ENCODE measurements at regions of chr2 and their contacts with region 1.

Region 1: GRCh38 chr2:65576861-65577601 is 144.6 kb upstream of the SPRED2 start:
- DNase-seq: no peak
- H3K4me3 Mint-ChIP-seq: no peak overlapping the region
- H3K27ac Mint-ChIP-seq: no peak overlapping the region
- H3K4me1 Mint-ChIP-seq: peaks cover 9% of the 10 kb centered on the region
- H3K27me3 Mint-ChIP-seq: peaks cover 16% of the 10 kb centered on the region

Region 2: GRCh38 chr2:65040400-65041261 is 536.4 kb before region 1 on chr2:
- intact Hi-C with region 1: loop called (anchors 2 kb)
- DNase-seq: peak; percentile 94
- H3K4me3 Mint-ChIP-seq: peak overlapping the region; percentile 53
- H3K27ac Mint-ChIP-seq: no peak overlapping the region
- H3K4me1 Mint-ChIP-seq: peaks cover 20% of the 10 kb centered on the region
- H3K27me3 Mint-ChIP-seq: no peaks in the 10 kb centered on the region

Region 3: DNA sequence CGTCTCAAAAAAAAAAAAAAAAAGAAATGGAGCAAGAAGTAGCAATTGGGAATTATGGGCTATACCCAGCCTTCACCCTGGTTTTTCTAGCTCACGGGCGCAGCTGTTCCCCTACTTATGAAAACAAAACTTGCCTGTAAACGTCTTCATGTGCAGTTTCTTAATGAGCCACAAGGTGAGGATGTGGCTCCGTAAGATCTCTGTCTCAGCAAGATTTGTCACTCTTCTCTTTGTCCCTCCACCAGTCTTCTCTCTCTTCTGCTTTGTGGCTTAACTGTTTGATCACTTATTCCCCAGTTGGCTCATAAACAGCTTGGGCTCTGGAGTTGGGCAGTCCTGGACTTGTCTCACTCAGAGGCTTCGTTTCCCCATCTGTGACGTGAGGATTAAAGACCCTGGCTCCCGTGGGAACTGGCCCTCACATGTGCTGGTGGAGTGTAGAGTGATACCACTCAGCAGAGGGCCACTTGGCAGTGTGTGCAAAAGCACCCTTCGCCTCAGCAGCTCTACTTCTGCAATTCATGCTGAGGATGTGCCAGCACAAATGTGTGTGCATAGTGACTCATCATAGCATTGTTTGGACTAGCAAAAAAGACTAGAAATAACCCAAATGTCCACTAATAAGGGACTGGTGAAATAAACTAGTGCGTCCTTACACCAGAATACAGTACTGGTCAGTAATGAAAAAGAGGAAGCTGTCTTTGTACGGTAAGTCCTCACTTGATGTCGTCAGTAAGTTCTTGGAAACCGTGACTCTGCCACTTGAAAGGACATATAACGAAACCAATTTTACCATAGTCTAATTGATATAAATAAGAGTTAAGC is 512.1 kb before region 1 on chr2:
- intact Hi-C with region 1: loop called (anchors 1 kb)
- DNase-seq: peak; percentile 87
- H3K4me3 Mint-ChIP-seq: no peak overlapping the region
- H3K27ac Mint-ChIP-seq: peak overlapping the region; percentile 16
- H3K4me1 Mint-ChIP-seq: peaks cover 22% of the 10 kb centered on the region
- H3K27me3 Mint-ChIP-seq: no peaks in the 10 kb centered on the region

Region 4: GRCh38 chr2:65186872-65187851 is 389.9 kb before region 1 on chr2:
- intact Hi-C with region 1: loop called (anchors 5 kb)
- DNase-seq: peak; percentile 90
- H3K4me3 Mint-ChIP-seq: no peak overlapping the region
- H3K27ac Mint-ChIP-seq: no peak overlapping the region
- H3K4me1 Mint-ChIP-seq: peaks cover 9% of the 10 kb centered on the region
- H3K27me3 Mint-ChIP-seq: peaks cover 27% of the 10 kb centered on the region

Region 5: DNA sequence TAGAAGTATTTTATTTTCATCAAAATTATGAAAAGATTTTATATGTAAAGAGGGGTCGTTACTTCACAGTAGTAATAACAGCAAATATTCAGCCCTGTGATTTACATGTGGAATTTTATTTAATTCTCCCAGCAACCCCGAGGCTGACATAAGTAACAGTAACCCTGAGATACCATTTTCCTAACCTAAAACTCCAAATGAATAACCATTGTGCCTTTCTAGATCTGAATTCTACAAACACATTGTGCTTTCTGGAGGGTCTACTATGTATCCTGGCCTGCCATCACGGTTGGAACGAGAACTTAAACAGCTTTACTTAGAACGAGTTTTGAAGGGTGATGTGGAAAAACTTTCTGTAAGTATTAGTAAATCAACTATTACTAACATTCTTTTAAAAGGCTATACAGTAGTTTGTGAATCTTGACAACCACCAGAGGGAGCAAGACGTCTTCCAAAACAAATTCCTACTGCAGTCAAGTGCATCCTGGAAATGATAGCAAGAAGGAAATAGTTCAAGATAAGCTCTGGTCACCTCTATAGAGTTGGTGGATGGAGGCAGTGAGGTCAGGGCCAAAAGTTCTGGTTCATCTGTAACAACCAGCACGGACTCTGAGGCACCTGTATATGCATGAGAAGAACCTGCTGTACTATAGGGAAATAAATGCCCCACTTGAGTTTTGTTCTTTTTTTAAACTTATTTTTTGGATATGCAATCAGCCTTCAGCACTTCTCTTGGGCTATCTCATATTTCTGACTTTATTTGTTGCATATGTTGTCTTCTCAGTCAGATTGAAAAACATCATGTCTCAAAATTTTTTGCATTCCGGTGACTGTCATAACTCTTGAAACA is 312.0 kb before region 1 on chr2:
- intact Hi-C with region 1: loop called (anchors 2 kb)
- DNase-seq: peak; percentile 70
- H3K4me3 Mint-ChIP-seq: no peak overlapping the region
- H3K27ac Mint-ChIP-seq: no peak overlapping the region
- H3K4me1 Mint-ChIP-seq: peaks cover 12% of the 10 kb centered on the region
- H3K27me3 Mint-ChIP-seq: no peaks in the 10 kb centered on the region

Region 6: DNA sequence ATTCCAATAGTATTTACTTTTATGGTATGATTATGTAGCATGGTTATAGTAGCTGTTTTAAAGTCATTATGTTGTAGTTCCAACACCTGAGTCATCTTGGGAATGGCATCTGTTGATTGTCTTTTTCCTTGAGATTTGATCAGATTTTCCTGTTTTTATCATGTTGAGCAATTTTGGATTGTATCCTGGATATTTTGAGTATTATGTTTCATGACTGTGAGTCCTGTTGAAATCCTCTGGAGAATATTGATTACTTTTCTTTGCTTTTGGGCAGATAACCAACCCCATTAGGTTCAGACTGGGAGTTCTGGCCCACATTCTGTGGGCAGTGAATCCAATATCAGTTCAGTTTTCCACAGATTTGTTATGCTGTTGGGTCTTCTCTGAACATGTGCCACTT is 18.6 kb after region 1 on chr2:
- intact Hi-C with region 1: no loop called
- DNase-seq: no peak
- H3K4me3 Mint-ChIP-seq: no peak overlapping the region
- H3K27ac Mint-ChIP-seq: no peak overlapping the region
- H3K4me1 Mint-ChIP-seq: no peaks in the 10 kb centered on the region
- H3K27me3 Mint-ChIP-seq: peaks cover 13% of the 10 kb centered on the region

Region 7: DNA sequence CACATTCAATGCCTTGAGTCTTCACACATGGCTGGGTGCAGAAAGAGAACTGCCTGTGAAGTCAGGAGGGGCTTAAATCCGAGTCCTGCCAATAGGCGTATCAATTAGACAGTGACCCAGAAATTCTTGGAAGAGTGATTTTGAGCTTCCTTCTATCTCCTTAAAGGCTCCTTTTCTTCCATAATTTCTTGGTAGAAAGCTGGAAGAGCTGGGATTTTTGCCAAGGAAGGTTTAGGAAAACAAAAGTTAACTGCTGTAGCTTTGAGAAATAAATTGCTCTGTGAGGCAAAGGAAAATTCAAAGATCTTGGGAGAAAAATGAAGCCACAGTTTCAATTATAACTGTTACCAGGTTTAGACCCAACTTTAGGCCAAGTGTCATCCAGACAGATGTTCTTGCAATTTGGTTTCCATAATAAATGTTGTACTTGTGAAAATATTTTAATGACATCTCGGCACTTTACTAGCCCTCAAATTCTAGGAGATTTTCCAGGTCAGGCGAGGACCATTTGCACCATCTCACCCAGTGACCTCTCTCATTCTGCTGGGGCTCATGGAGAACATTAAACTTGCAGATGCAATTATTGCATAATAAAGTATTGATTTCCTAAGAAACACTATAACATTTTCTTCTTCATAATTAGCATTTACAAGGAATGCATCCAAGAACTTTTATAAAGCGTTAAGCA is 528.2 kb after region 1 on chr2:
- intact Hi-C with region 1: no loop called
- DNase-seq: no peak
- H3K4me3 Mint-ChIP-seq: no peak overlapping the region
- H3K27ac Mint-ChIP-seq: no peak overlapping the region
- H3K4me1 Mint-ChIP-seq: no peaks in the 10 kb centered on the region
- H3K27me3 Mint-ChIP-seq: no peaks in the 10 kb centered on the region

Measured in activated CD4-positive, alpha-beta T cell treated with anti-CD3 and anti-CD28 coated beads, Interleukin-2, amount 10 ng/mL, durations not matched to agents 24 days and 14 days (primary cell).